A549 (cell line): ENCODE measurements at regions of chr20 and their contacts with region 1.

Region 1: GRCh38 chr20:5529331-5530148 is 212.8 kb upstream of the PROKR2 start:
- DNase-seq: peak; percentile 77 to 87
- ATAC-seq: peak; percentile 91 to 93
- H3K4me3 ChIP-seq: 0 out of 3 replicates have a peak overlapping the region, but pooled peaks have one; percentile 14
- H3K27ac ChIP-seq: peak overlapping the region; percentile 17 to 50; a peak in 4 of 6 replicates
- H3K4me1 ChIP-seq: peaks cover 16% of the 10 kb centered on the region
- CTCF ChIP-seq: peak; percentile 91
- EP300 ChIP-seq: no peak; a peak in 1 of 5 replicates
- POLR2A ChIP-seq: no peak
- RAD21 ChIP-seq: peak; percentile 93

Region 2: GRCh38 chr20:4925842-4926530 is 603.6 kb before region 1 on chr20:
- CTCF ChIA-PET with region 1: no interaction called
- POLR2A ChIA-PET with region 1: no interaction called
- DNase-seq: peak in 1 of 2 experiments; percentile 49
- ATAC-seq: peak in 1 of 2 experiments; percentile 49; a peak in 3 of 6 replicates
- H3K4me3 ChIP-seq: no peak overlapping the region
- H3K27ac ChIP-seq: peak overlapping the region; percentile 2 to 26; a peak in 2 of 6 replicates
- H3K4me1 ChIP-seq: peaks cover 11% of the 10 kb centered on the region
- CTCF ChIP-seq: no peak
- EP300 ChIP-seq: no peak
- POLR2A ChIP-seq: no peak
- RAD21 ChIP-seq: no peak

Region 3: DNA sequence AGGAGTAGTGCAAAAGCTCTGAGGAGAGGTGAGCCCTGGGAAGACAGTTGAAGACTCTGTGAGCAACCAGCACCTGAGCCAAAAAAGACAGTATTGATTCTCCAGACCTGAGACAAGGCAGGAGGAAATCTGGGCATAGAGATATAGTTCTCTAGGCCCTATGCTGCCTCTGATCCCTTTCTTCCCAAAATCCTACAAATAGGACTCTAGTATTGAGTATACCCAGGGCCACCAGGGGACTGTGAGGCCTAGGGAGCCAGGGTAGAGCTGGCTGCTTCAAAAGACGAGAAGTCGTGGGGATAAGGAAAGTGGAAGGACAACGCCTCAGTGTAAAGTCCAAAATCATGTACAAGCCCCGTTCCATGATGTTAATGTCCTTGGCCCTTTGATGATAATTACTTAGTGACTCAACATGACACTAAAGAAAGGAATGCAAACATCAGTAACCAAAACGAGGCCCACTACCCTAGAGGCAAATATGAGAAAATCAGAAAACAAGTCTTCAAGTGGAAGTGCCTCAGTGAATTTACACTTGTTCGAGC is 15.5 kb before region 1 on chr20:
- CTCF ChIA-PET with region 1: interaction called, 41 read pairs
- POLR2A ChIA-PET with region 1: no interaction called
- DNase-seq: peak; percentile 84 to 88
- ATAC-seq: peak; percentile 95 to 97
- H3K4me3 ChIP-seq: no peak overlapping the region
- H3K27ac ChIP-seq: peak overlapping the region; percentile 72 to 78
- H3K4me1 ChIP-seq: peaks cover 15% of the 10 kb centered on the region
- CTCF ChIP-seq: no peak
- EP300 ChIP-seq: no peak; a peak in 1 of 5 replicates
- POLR2A ChIP-seq: no peak
- RAD21 ChIP-seq: no peak

Region 4: GRCh38 chr20:5557123-5557522 is 27.6 kb after region 1 on chr20:
- CTCF ChIA-PET with region 1: interaction called, 56 read pairs
- POLR2A ChIA-PET with region 1: no interaction called
- DNase-seq: peak; percentile 67 to 78
- ATAC-seq: peak; percentile 91 to 97
- H3K4me3 ChIP-seq: no peak overlapping the region
- H3K27ac ChIP-seq: 0 out of 6 replicates have a peak overlapping the region, but pooled peaks of 1 of the 2 experiments have one; percentile 20
- H3K4me1 ChIP-seq: peaks cover 16% of the 10 kb centered on the region; the same call in 2 of the 3 replicates
- CTCF ChIP-seq: peak; percentile 91
- EP300 ChIP-seq: no peak
- POLR2A ChIP-seq: no peak
- RAD21 ChIP-seq: peak; percentile 86 to 94

Region 5: DNA sequence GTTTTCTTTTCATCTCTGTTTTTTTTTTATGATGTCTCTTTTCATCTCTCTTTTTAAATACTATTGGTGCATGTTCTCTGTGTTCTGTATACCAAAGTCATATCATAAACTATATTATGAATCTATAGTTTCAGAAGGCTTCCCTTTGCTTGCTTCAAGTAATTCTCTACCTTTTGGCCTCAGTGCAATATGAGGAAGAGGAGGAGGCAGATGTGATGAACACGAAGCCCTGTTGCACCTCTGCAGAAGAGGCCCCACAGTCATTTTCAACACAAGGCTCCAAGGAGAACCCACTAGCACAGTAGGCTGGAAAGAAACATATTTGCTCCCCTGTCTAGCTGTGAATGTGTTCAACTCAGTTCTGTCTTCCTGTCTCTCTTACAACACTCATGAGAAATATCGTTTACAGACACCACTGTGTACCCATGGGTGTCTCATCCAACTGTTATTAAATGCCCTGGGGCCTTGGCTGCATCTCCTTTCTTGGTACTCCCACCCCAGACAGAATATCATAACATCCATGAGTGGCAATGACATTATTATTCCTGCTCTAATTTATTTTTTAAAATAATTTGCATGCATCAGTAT is 98.0 kb after region 1 on chr20:
- CTCF ChIA-PET with region 1: no interaction called
- POLR2A ChIA-PET with region 1: no interaction called
- DNase-seq: no peak
- ATAC-seq: peak; percentile 32 to 59; a peak in 4 of 6 replicates
- H3K4me3 ChIP-seq: no peak overlapping the region
- H3K27ac ChIP-seq: peak overlapping the region; percentile 3 to 27; a peak in 3 of 6 replicates
- H3K4me1 ChIP-seq: peaks cover 7% of the 10 kb centered on the region; the same call in 2 of the 3 replicates
- CTCF ChIP-seq: no peak
- EP300 ChIP-seq: no peak
- POLR2A ChIP-seq: no peak
- RAD21 ChIP-seq: no peak

Region 6: DNA sequence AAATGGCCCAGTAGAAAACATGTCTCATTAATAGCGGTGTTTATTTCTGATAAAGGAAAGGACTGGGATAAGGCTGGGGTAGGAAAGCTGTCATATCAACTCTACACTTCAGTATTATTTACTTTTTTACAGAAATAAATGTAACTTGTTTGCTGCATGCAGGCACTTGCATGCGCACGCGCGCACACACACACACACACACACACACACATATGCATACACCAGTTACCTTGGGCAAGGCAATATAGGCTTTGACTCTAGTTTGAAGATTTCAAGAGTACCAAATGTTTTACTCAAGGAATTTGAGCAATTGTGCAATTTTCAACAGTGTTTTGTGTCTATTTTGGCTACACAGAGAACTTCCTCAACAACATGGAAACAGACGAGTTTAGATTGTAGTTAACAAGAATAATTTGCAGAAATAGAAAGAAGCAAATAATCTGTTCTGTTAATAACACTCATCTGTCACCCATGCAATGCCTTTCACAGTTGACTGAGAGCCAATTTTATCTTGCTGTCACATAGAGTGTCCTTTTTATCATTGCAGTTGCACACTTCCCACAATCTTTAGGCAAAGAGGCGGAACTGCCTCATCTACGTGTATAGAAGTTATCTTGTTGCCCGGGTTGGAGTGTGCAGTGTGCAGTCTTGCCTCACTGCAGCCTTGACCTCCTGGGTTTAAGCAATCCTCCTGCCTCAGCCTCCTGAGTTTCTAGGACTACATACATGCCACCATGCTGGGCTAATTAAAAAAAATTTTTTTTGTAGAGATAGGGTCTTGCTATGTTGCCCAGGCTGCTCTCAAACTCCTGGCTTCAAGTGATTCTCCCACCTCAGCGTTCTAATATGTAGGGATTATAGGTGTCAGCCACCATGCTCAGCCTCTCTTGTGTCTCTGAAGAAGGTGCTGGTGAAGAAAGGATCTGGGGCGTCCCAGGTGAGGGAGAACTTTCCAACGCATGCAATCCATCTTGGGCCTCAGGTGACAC is 145.9 kb after region 1 on chr20:
- CTCF ChIA-PET with region 1: no interaction called
- POLR2A ChIA-PET with region 1: no interaction called
- DNase-seq: no peak
- ATAC-seq: no peak
- H3K4me3 ChIP-seq: no peak overlapping the region
- H3K27ac ChIP-seq: peak overlapping the region; percentile 1 to 3; a peak in 2 of 6 replicates
- H3K4me1 ChIP-seq: peaks cover 23% of the 10 kb centered on the region
- CTCF ChIP-seq: no peak
- EP300 ChIP-seq: no peak
- POLR2A ChIP-seq: no peak
- RAD21 ChIP-seq: no peak

Region 7: GRCh38 chr20:5797843-5798462 is 268.4 kb after region 1 on chr20:
- CTCF ChIA-PET with region 1: interaction called, 13 read pairs
- POLR2A ChIA-PET with region 1: no interaction called
- DNase-seq: no peak
- ATAC-seq: no peak
- H3K4me3 ChIP-seq: no peak overlapping the region
- H3K27ac ChIP-seq: 0 out of 6 replicates have a peak overlapping the region, but pooled peaks of 1 of the 2 experiments have one; percentile 12
- H3K4me1 ChIP-seq: no peaks in the 10 kb centered on the region
- CTCF ChIP-seq: no peak
- EP300 ChIP-seq: no peak
- POLR2A ChIP-seq: no peak
- RAD21 ChIP-seq: no peak

Region 8: GRCh38 chr20:5918856-5919625 is 389.5 kb after region 1 on chr20:
- CTCF ChIA-PET with region 1: interaction called, 10 read pairs
- POLR2A ChIA-PET with region 1: no interaction called
- DNase-seq: peak; percentile 51 to 56
- ATAC-seq: peak; percentile 78 to 82
- H3K4me3 ChIP-seq: no peak overlapping the region
- H3K27ac ChIP-seq: peak overlapping the region; percentile 50 to 64
- H3K4me1 ChIP-seq: peaks cover 17% of the 10 kb centered on the region
- CTCF ChIP-seq: no peak
- EP300 ChIP-seq: no peak; a peak in 1 of 5 replicates
- POLR2A ChIP-seq: no peak
- RAD21 ChIP-seq: no peak

Region 9: DNA sequence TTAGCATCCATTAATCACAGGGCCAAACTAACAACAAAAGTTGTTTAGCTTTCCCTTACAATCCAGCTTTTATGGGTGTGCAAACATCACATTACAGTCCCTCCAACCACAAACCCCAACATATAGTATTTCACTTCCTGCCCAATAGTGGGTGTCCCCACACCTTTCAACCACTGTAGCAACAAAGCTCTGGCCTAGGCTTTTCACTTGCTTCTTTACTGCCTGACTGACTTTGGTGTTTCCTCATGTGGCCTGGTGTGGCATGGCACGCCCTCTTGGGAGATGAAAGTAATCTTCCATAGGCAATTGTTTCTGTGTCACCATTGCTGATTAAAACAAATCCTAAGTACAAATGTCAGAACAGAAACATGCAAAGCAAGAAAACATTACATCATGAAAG is 467.2 kb after region 1 on chr20:
- CTCF ChIA-PET with region 1: interaction called, 22 read pairs
- POLR2A ChIA-PET with region 1: no interaction called
- DNase-seq: peak in 1 of 2 experiments; percentile 35
- ATAC-seq: peak; percentile 59 to 76; a peak in 5 of 6 replicates
- H3K4me3 ChIP-seq: no peak overlapping the region
- H3K27ac ChIP-seq: no peak overlapping the region
- H3K4me1 ChIP-seq: peaks cover 6% of the 10 kb centered on the region
- CTCF ChIP-seq: no peak
- EP300 ChIP-seq: no peak
- POLR2A ChIP-seq: no peak
- RAD21 ChIP-seq: no peak

Region 10: DNA sequence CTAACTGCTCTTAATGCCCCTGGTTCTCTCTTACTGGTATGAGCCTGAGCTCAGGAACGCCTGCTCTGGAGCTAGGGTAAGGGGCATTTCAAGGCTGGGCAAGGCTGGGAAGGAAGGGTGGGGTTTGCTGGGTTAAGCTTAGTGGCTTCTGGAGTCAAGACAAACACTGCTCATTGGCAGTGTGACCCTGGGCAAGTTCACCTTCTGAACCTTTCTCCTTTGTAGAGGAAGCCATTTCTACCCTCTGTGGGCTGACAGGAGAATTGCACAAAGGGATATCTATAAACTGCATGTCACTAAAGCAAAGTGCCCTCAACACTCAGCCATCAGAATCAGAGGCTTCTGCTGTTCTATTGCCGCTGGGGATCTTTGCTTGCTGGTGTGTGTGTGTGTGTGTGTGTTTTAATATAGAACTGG is 544.6 kb after region 1 on chr20:
- CTCF ChIA-PET with region 1: interaction called, 153 read pairs
- POLR2A ChIA-PET with region 1: no interaction called
- DNase-seq: peak; percentile 52 to 57
- ATAC-seq: peak; percentile 82 to 88
- H3K4me3 ChIP-seq: no peak overlapping the region
- H3K27ac ChIP-seq: no peak overlapping the region
- H3K4me1 ChIP-seq: 0 out of 3 replicates have a peak, but pooled peaks cover 3% of the 10 kb centered on the region
- CTCF ChIP-seq: no peak
- EP300 ChIP-seq: no peak
- POLR2A ChIP-seq: no peak
- RAD21 ChIP-seq: peak; percentile 24 to 34; a peak in 3 of 5 replicates